Heart left ventricle (tissue), 16 donors: ENCODE measurements at regions of chr15 and their contacts with region 1.

Region 1: GRCh38 chr15:66747886-66748707 is 46.1 kb downstream of the SMAD6 start:
- DNase-seq: no peak
- ATAC-seq: no peak
- H3K4me3 ChIP-seq: no peak overlapping the region
- H3K27ac ChIP-seq: peak overlapping the region in 5 of 12 donors; percentile 11 to 76 (median 31)
- H3K4me1 ChIP-seq: peaks cover 0 to 100% (median 86%) of the 10 kb centered on the region in 12 donors
- H3K27me3 ChIP-seq: no peaks in the 10 kb centered on the region
- CTCF ChIP-seq: no peak
- POLR2A ChIP-seq: no peak

Region 2: DNA sequence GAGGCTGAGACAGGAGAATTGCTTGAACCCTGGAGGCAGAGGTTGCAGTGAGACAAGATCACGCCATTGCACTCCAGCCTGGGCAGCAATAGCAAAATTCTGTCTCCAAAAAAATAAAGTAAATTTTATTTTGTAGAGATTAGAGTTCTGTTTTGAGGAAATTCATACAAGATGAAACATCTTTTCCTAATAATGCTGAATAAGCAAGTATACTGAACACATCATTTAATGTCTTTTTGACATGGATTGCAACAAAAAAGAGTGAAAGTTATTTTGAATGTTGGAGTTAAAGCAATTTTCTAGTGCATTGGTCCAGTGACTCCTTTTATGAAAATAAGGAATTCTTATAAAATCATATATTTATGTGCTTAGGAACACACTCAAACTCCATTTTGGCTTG is 202.8 kb before region 1 on chr15:
- intact Hi-C with region 1: no loop called
- DNase-seq: no peak
- ATAC-seq: no peak
- H3K4me3 ChIP-seq: no peak overlapping the region
- H3K27ac ChIP-seq: no peak overlapping the region
- H3K4me1 ChIP-seq: no peaks in the 10 kb centered on the region
- H3K27me3 ChIP-seq: no peaks in the 10 kb centered on the region
- CTCF ChIP-seq: no peak
- POLR2A ChIP-seq: no peak

Region 3: GRCh38 chr15:66714543-66714981 is 33.5 kb before region 1 on chr15:
- intact Hi-C with region 1: loop called in 1 of 10 experiments (anchors 5 kb)
- DNase-seq: peak in 1 of 5 donors; percentile 16
- ATAC-seq: no peak
- H3K4me3 ChIP-seq: no peak overlapping the region
- H3K27ac ChIP-seq: peak overlapping the region in 1 of 12 donors; percentile 40
- H3K4me1 ChIP-seq: peaks cover 0 to 65% (median 30%) of the 10 kb centered on the region in 12 donors
- H3K27me3 ChIP-seq: no peaks in the 10 kb centered on the region
- CTCF ChIP-seq: no peak
- POLR2A ChIP-seq: no peak